Endothelial cell of umbilical vein (primary cell): ENCODE measurements at regions of chr17 and their contacts with region 1.

Region 1: DNA sequence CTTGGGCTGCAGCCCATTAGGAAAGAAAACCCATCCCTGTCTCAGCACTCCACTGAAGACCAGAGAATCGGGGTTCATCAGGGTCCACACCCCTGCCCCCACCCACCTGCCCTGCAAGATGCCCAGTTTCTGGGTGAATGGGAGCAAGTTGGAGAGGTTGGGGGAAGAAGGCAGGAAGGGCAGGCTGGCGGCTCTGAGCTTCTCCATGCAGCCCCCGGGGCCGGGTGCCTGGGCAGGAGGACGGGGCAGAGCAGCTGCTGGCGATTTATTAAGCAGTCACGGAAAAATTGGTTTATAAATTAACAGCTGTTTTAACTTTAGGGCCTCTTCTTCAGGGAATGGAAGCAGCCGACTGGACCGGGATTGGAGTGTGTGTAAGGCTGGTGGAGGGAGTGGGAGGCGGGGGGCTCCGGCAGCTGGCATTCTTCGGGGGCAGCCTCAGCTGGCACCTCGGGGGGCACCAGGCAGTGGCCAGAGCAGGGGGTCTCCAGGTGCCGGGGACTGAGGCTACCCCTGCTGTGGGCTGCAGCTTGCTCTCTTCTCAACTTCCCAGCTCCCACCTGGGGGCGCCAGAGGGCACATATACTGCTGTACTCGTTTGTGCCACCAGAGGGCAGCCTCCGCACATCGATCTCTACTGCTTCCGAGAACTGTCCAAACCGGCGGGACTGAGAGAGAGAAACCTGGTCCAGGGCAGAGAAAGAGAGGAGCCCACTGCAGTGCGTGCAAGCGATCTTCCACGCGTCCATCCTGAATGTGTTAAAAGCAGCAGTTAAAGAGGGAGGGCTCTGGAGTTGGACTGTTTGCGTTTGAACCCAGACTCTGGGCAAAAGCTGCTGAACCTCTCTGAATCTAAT is 5.0 kb upstream of the PPP1R1B start:
- DNase-seq: peak; percentile 87
- H3K4me3 ChIP-seq: no peak overlapping the region
- H3K27ac ChIP-seq: no peak overlapping the region
- H3K4me1 ChIP-seq: peaks cover 10% of the 10 kb centered on the region
- H3K27me3 ChIP-seq: peaks cover 24 to 26% of the 10 kb centered on the region in 2 experiments
- CTCF ChIP-seq: peak; percentile 100
- POLR2A ChIP-seq: no peak

Region 2: GRCh38 chr17:39547713-39548478 is 73.9 kb before region 1 on chr17:
- CTCF ChIA-PET with region 1: interaction called, 164 read pairs
- POLR2A ChIA-PET with region 1: no interaction called
- dilution Hi-C with region 1: no loop called
- intact Hi-C with region 1: loop called (anchors 1 kb)
- DNase-seq: peak; percentile 64
- H3K4me3 ChIP-seq: no peak overlapping the region
- H3K27ac ChIP-seq: no peak overlapping the region
- H3K4me1 ChIP-seq: peaks cover 6% of the 10 kb centered on the region
- H3K27me3 ChIP-seq: no peaks in the 10 kb centered on the region
- CTCF ChIP-seq: peak; percentile 85 to 95
- POLR2A ChIP-seq: no peak

Region 3: GRCh38 chr17:39591958-39592954 is 29.5 kb before region 1 on chr17:
- CTCF ChIA-PET with region 1: interaction called, 11 read pairs
- POLR2A ChIA-PET with region 1: no interaction called
- dilution Hi-C with region 1: no loop called
- intact Hi-C with region 1: no loop called
- DNase-seq: peak; percentile 34
- H3K4me3 ChIP-seq: no peak overlapping the region
- H3K27ac ChIP-seq: no peak overlapping the region
- H3K4me1 ChIP-seq: no peaks in the 10 kb centered on the region
- H3K27me3 ChIP-seq: peaks cover 25 to 30% of the 10 kb centered on the region in 2 experiments
- CTCF ChIP-seq: no peak
- POLR2A ChIP-seq: no peak

Region 4: DNA sequence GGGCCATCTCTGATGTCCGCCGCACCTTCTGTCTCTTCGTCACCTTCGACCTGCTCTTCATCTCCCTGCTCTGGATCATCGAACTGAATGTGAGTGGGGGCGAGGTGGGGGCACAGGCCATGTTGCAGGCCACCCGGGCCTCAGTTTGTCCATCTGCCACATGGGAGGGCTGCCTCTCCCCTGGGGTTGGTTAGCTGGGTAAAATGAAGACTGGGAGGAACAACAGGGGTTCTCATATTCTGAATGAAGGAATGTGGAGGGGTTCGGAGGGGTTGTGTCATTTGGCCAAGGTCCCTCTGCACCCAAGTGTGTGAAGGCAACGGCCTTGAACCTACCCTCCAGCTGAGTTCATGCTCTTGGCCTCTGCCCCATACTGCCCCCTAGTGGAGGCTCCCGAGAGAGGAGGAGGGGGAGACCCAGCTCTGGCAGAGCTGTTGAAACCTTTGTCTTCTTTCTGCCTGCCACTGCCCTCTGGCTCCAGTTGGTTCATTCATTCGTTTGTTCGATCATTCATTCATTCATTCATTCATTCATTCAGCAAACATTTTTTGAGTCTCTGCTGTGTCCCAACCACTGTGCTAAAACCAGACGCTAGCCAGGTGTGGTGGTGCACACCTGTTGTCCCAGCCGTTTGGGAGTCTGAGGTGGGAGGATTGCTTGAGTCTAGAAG is 32.0 kb after region 1 on chr17:
- CTCF ChIA-PET with region 1: interaction called, 114 read pairs
- POLR2A ChIA-PET with region 1: no interaction called
- dilution Hi-C with region 1: no loop called
- intact Hi-C with region 1: loop called (anchors 2 kb)
- DNase-seq: peak; percentile 35
- H3K4me3 ChIP-seq: no peak overlapping the region
- H3K27ac ChIP-seq: no peak overlapping the region
- H3K4me1 ChIP-seq: peaks cover 1% of the 10 kb centered on the region
- H3K27me3 ChIP-seq: no peaks in the 10 kb centered on the region
- CTCF ChIP-seq: peak; percentile 93 to 96
- POLR2A ChIP-seq: no peak

Region 5: DNA sequence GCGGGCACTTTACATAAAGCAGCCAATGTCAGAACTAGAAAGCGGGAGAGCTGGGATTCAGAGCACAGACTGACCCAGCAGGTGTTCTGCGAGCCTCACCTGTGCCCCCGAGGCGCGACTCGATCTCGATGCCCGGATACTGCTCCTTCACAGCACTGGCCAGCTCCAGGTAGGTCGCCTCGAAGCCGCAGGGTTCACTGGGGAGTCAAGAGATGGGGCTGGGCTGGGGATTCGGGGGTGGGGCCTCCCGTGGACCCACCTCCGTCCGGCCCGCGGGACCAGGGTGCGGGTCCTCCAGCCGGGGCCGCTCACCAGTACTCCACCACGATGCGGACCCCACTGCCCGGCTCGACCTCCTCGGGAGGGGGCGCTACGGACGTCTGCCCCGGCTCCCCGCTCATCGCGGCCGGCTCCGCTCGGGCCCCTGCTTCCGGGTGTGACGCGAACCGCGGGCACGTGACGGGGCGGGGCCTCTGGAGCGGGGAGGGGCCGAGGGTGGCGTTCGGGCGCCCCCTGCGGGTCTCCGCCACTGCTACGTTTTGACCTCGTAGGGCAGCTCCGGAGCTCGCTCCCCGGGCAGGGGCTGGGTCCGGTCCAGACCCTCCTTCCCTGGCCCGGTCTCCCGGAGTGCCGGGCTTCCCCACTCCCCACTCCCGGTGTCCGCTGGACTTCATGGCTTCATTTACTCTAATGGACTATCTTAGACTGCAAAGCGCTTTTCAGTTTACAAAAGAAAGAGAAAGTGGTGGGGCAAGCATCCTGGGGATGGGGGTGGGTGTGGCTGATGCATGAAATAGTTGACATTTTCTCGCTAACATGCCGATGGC is 108.6 kb after region 1 on chr17 and contains the start of gene MIEN1:
- CTCF ChIA-PET with region 1: interaction called, 33 read pairs
- POLR2A ChIA-PET with region 1: no interaction called
- dilution Hi-C with region 1: no loop called
- intact Hi-C with region 1: loop called (anchors 2 kb)
- DNase-seq: peak; percentile 86
- H3K4me3 ChIP-seq: peak within 1 kb of the TSS; percentile 40 to 87 (median 59)
- H3K27ac ChIP-seq: peak within 1 kb of the TSS; percentile 68
- H3K4me1 ChIP-seq: peaks cover 13% of the 10 kb centered on the region
- H3K27me3 ChIP-seq: no peaks in the 10 kb centered on the region
- CTCF ChIP-seq: peak; percentile 83 to 95
- POLR2A ChIP-seq: peak; percentile 82
- total RNA-seq, gene MIEN1: 42.4 and 51.1 TPM in 2 replicates